Mammary epithelial cell (primary cell): ENCODE measurements at regions of chr5 and their contacts with region 1.

Region 1: DNA sequence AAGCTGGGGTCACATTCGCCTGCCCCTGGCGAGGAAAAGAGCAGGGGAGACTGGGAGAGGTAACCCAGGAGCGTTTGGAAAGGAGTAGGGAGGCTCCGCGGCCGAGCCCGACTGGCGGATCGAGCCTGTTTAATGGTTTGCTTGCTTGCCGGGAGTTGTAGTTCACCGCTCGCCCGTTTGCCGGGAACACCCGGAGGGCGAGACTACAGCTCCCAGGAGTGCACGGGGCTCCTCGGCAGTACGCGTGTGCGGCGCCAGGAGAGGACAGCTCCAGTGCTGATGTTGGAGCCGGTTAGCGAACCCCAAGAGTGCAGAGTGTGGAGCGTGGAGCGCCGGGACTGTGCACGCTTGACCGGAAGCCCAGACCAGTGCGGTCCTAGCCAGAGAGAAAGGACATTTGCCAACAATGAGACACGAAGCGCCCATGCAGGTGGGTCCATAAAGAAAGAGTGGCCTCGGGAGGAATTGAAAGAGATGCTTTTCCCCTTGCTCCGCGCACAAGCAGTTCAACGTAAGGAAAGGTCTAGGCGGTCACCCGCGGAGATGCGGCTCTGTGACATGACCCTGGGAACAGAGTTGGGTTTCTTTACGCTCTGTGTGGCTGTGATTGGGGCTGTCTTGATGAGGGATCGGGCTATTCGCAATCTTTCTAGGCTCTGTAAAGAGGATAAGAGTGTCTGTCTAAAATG is at the start of gene RAB3C:
- DNase-seq: peak; percentile 91
- H3K4me3 ChIP-seq: peak within 1 kb of the TSS; percentile 44 to 61 (median 59)
- H3K27ac ChIP-seq: no peak within 1 kb of the TSS
- H3K4me1 ChIP-seq: peaks cover 6% of the 10 kb centered on the region
- H3K27me3 ChIP-seq: peaks cover 9% of the 10 kb centered on the region
- CTCF ChIP-seq: no peak
- total RNA-seq, gene RAB3C: not detected

Region 2: GRCh38 chr5:58191451-58191850 is 391.5 kb before region 1 on chr5:
- CTCF ChIA-PET with region 1: no interaction called
- dilution Hi-C with region 1: no loop called
- in situ Hi-C with region 1: no loop called
- intact Hi-C with region 1: no loop called
- DNase-seq: peak; percentile 57
- H3K4me3 ChIP-seq: no peak overlapping the region
- H3K27ac ChIP-seq: no peak overlapping the region
- H3K4me1 ChIP-seq: peaks cover 21% of the 10 kb centered on the region
- H3K27me3 ChIP-seq: no peaks in the 10 kb centered on the region
- CTCF ChIP-seq: no peak

Region 3: DNA sequence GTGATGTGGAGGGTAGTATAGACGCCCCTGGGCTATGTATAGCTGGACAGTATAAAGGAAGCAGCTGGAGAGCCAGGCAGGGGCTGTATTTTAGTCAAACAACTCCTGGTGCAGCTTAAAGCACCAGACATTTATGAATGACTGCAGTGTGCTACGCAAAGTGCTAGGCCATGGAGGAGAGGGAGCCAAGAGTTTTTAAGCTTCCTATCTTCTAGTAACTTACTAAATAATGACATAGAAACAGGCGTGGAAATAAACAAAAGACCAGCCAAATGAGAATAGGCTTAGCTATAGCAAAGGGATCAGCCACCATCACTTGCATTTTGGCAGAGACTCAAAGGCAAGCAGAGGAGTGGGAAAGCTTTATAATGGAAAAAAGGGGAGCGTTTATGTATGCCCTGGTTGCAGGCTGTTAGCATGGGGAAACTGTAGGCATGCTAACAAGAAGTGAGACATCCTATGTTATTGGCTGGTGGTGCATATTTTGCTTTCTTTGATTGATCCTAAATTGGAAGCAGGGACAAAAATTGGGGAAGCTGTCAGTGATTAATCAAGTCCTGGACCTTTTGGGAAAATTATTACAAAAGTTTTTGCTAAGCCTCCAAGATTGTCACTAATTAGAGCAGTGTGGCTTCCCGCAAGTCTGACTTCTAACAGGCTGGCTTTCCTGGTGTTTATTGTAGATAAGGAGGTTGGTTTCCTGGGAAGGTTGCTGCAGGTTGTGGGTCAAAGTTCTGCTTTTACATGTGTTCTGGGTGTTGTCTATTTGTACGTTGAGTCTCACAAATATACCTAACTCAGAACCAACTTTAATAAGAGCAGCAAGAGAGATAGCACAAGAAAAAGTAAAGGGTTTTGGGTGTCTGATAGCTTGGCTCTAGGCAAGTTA is 46.6 kb after region 1 on chr5:
- CTCF ChIA-PET with region 1: no interaction called
- dilution Hi-C with region 1: loop called (anchors 5 kb)
- in situ Hi-C with region 1: no loop called
- intact Hi-C with region 1: no loop called
- DNase-seq: no peak
- H3K4me3 ChIP-seq: no peak overlapping the region
- H3K27ac ChIP-seq: no peak overlapping the region
- H3K4me1 ChIP-seq: no peaks in the 10 kb centered on the region
- H3K27me3 ChIP-seq: no peaks in the 10 kb centered on the region
- CTCF ChIP-seq: no peak